MCF 10A (cell line): ENCODE measurements at regions of chr2 and their contacts with region 1.

Region 1: GRCh38 chr2:69741619-69742466 is at the start of gene ANXA4:
- DNase-seq: peak; percentile 91
- H3K4me3 Mint-ChIP-seq: peak within 1 kb of the TSS; percentile 83
- H3K27ac Mint-ChIP-seq: peak within 1 kb of the TSS; percentile 97
- H3K4me1 Mint-ChIP-seq: peaks cover 14% of the 10 kb centered on the region
- H3K27me3 Mint-ChIP-seq: no peaks in the 10 kb centered on the region
- CTCF ChIP-seq: no peak
- total RNA-seq, gene ANXA4: 79.8 and 82.9 TPM in 2 replicates

Region 2: DNA sequence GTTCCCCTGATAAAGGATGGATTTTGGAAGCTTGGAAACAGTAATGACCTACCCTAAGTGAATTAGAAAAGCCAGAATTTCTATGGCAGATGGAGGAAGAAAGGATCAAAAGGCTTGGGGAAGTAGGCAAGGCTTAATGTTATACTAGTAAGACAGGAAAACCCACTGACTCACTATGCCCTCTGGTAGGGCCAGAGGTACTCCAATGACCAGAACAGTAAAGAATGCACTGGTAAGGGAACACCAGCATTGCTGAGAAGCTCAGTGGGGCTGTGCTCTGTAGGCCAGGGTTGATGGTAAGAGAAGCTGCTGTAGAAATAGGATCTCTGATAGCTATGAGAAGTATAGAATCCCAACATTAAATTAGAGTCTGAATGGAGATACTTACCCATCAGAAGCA is 481.2 kb before region 1 on chr2:
- CTCF ChIA-PET with region 1: no interaction called
- POLR2A ChIA-PET with region 1: no interaction called
- intact Hi-C with region 1: no loop called
- DNase-seq: no peak
- H3K4me3 Mint-ChIP-seq: no peak overlapping the region
- H3K27ac Mint-ChIP-seq: no peak overlapping the region
- H3K4me1 Mint-ChIP-seq: no peaks in the 10 kb centered on the region
- H3K27me3 Mint-ChIP-seq: no peaks in the 10 kb centered on the region
- CTCF ChIP-seq: no peak

Region 3: GRCh38 chr2:69464575-69464974 is 277.3 kb before region 1 on chr2:
- CTCF ChIA-PET with region 1: no interaction called
- POLR2A ChIA-PET with region 1: no interaction called
- intact Hi-C with region 1: no loop called
- DNase-seq: peak; percentile 69
- H3K4me3 Mint-ChIP-seq: no peak overlapping the region
- H3K27ac Mint-ChIP-seq: peak overlapping the region; percentile 84
- H3K4me1 Mint-ChIP-seq: peaks cover 8% of the 10 kb centered on the region
- H3K27me3 Mint-ChIP-seq: no peaks in the 10 kb centered on the region
- CTCF ChIP-seq: no peak

Region 4: GRCh38 chr2:69643602-69644505 is 98.0 kb before region 1 on chr2 and contains the start of gene AAK1:
- CTCF ChIA-PET with region 1: no interaction called
- POLR2A ChIA-PET with region 1: interaction called, 13 read pairs
- intact Hi-C with region 1: no loop called
- DNase-seq: peak; percentile 86
- H3K4me3 Mint-ChIP-seq: peak within 1 kb of the TSS; percentile 73
- H3K27ac Mint-ChIP-seq: peak within 1 kb of the TSS; percentile 74
- H3K4me1 Mint-ChIP-seq: peaks cover 48% of the 10 kb centered on the region
- H3K27me3 Mint-ChIP-seq: no peaks in the 10 kb centered on the region
- CTCF ChIP-seq: no peak
- total RNA-seq, gene AAK1: 75.8 and 108 TPM in 2 replicates

Region 5: GRCh38 chr2:69704446-69704845 is 37.4 kb before region 1 on chr2:
- CTCF ChIA-PET with region 1: no interaction called
- POLR2A ChIA-PET with region 1: no interaction called
- intact Hi-C with region 1: no loop called
- DNase-seq: peak; percentile 55
- H3K4me3 Mint-ChIP-seq: no peak overlapping the region
- H3K27ac Mint-ChIP-seq: no peak overlapping the region
- H3K4me1 Mint-ChIP-seq: peaks cover 11% of the 10 kb centered on the region
- H3K27me3 Mint-ChIP-seq: no peaks in the 10 kb centered on the region
- CTCF ChIP-seq: no peak

Region 6: GRCh38 chr2:69755862-69756467 is 14.1 kb after region 1 on chr2:
- CTCF ChIA-PET with region 1: interaction called, 6 read pairs
- POLR2A ChIA-PET with region 1: interaction called, 107 read pairs
- intact Hi-C with region 1: loop called (anchors 1 kb)
- DNase-seq: peak; percentile 94
- H3K4me3 Mint-ChIP-seq: peak overlapping the region; percentile 17
- H3K27ac Mint-ChIP-seq: peak overlapping the region; percentile 41
- H3K4me1 Mint-ChIP-seq: peaks cover 28% of the 10 kb centered on the region
- H3K27me3 Mint-ChIP-seq: no peaks in the 10 kb centered on the region
- CTCF ChIP-seq: no peak

Region 7: DNA sequence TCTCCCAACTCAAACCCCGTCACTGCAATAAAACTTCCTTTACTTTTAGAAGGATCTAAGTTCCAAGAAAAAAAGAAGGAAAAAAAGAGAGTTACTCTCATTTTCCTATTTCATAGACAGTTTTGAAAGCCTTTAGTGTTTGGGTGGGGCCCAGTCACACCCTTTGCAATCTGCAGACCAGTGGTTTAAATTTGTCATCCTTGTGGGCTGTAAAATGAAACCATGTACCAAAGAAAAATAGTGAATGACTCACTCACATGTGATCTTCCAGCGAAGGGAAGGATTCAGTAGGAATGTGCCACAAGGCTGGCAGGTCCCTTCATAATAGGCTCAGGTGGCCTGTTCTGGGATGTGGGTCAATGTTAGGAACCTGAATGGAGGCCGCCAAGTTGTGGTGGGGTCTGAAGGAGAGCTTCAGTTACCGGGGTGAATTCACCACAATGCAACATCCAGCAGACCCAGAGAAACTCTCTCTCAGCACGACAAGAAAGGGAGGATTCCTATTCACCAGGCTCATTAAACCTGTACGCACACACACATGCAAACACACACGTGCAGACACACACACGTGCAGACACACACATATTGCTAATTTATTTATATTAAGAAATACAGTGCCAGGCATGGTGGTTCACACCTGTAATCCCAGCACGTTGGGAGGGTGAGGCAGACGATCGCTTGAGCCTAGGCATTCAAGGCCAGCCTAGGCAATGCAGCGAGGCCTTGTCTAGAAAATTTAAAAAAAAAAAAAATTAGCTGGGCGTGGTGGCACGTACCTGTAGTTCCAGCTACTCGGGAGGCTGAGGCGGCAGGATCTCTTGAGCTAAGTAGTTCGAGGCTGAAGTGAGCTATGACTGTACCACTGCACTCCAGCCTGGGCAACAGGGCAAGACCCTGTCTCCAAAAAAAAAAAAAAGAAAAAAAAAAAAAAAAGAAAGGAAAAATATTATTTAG is 28.6 kb after region 1 on chr2:
- CTCF ChIA-PET with region 1: interaction called, 5 read pairs
- POLR2A ChIA-PET with region 1: interaction called, 90 read pairs
- intact Hi-C with region 1: loop called (anchors 1 kb)
- DNase-seq: peak; percentile 87
- H3K4me3 Mint-ChIP-seq: peak overlapping the region; percentile 57
- H3K27ac Mint-ChIP-seq: peak overlapping the region; percentile 92
- H3K4me1 Mint-ChIP-seq: peaks cover 37% of the 10 kb centered on the region
- H3K27me3 Mint-ChIP-seq: no peaks in the 10 kb centered on the region
- CTCF ChIP-seq: no peak

Region 8: DNA sequence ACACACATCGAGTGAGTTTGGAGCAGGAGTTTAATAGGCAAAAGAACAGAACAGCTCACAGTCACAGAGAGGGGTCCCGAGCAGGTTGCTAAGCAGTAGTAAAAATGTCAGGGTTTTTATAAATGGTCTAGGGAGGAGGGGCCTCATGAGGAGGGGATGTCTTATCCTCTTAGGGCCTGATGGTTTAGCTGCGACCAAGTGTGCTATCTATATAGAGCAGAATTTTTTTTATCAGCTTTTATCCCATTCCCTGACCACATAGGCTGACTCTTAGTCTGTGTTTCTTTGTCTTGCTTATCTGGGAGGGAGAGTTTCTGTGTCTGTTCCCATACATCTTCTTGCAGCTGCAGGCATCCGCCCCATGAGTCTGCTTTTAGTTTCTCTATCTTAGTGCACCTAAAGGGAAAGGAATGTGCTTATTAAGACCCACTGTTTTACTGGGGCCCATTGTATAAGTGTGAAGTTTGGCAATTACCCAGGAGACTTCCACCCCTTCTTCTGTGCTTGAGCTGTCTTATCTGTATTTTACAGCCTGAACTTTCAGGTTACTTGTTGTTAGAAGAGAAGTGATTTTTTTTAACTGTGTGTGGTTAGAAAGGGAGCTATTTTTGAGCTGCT is 57.2 kb after region 1 on chr2:
- CTCF ChIA-PET with region 1: interaction called, 3 read pairs
- POLR2A ChIA-PET with region 1: interaction called, 22 read pairs
- intact Hi-C with region 1: loop called (anchors 5 kb)
- DNase-seq: no peak
- H3K4me3 Mint-ChIP-seq: peak overlapping the region; percentile 71
- H3K27ac Mint-ChIP-seq: peak overlapping the region; percentile 88
- H3K4me1 Mint-ChIP-seq: peaks cover 28% of the 10 kb centered on the region
- H3K27me3 Mint-ChIP-seq: no peaks in the 10 kb centered on the region
- CTCF ChIP-seq: no peak

Region 9: GRCh38 chr2:69829256-69830046 is 87.6 kb after region 1 on chr2 and contains the start of gene GMCL1:
- CTCF ChIA-PET with region 1: interaction called, 3 read pairs
- POLR2A ChIA-PET with region 1: interaction called, 23 read pairs
- intact Hi-C with region 1: no loop called
- DNase-seq: peak; percentile 96
- H3K4me3 Mint-ChIP-seq: peak within 1 kb of the TSS; percentile 97
- H3K27ac Mint-ChIP-seq: peak within 1 kb of the TSS; percentile 59
- H3K4me1 Mint-ChIP-seq: peaks cover 18% of the 10 kb centered on the region
- H3K27me3 Mint-ChIP-seq: no peaks in the 10 kb centered on the region
- CTCF ChIP-seq: no peak
- total RNA-seq, gene GMCL1: 13.2 and 13.6 TPM in 2 replicates